ENCODE measurements at regions of chr15 and their contacts with region 1.

Region 1: DNA sequence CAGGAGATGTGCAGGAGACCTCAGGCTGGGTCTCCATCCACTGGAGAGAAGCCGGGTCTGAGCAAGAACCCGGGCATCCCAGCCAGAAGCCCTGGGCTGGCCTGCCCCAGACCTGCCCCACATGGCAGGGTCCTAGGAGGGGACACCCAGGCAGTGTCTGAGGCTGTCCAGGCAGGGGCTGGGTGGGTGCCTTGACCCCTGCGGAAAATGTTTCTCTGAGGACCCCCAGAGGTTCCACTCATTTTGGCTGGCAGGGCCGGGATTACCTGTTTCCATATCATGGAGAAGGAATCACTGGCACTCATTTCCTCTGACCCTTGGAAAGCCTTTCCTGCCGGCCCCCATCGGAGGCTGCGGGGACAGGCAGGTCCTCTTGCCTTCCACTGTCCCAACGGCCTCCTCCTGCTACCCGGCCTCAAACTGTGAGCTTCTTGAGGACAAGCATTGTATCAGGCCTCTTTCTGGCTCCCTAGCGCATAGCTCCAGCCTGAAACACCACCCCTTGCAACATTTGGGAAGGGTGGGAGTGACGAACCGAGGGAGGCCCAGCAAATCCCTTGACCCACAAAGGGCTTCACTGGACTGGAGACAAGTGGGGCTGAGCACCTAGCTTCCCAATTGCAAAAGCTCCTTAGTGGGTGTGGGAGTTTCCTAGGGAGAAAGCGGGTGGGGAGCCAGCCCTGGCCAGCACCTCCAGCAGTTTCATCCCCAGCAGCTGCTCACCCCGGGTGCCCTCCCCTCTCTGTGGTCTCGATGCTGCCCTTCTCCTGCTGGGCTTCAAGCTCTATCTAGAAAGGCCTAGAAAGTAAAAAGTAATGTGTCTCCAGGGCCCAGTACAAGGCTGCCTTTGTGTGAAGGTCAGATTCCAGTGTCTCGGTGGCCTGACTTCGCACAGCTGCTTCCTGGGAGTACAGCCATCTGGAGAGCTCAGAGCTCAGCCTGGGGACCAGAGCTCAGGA is 29.7 kb downstream of the ACSBG1 start:
- DNase-seq: no peak
- H3K4me3 ChIP-seq: no peak overlapping the region
- H3K27ac ChIP-seq: no peak overlapping the region
- H3K4me1 ChIP-seq: peaks cover 0 to 13% of the 10 kb centered on the region in 2 experiments; a peak in 2 of 4 replicates
- H3K27me3 ChIP-seq: 0 out of 2 replicates have a peak, but pooled peaks cover 8% of the 10 kb centered on the region
- CTCF ChIP-seq: no peak
- EP300 ChIP-seq: no peak
- RAD21 ChIP-seq: no peak

Region 2: DNA sequence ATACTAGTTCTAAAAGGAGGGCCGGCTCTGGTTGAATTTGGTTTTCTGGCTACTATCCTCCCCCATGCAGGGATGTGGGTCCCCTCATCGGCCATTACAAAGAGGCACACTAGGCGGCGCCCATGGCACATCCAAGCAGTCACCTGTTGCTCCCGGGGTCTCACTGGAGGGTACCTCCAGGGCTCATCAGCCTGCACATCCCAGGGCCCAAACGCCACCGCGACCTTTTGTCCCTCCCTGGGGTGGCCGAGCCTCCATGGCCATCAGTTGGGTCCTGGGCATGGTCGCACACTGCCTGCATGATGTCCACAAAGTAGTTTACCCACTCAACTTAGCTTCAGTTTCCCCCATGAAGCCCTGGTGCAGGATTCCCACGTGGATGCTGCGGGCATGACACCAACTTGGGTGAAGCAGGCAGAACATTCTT is 27.2 kb before region 1 on chr15:
- CTCF ChIA-PET with region 1: interaction called, 12 read pairs
- POLR2A ChIA-PET with region 1: no interaction called
- DNase-seq: peak; percentile 78
- H3K4me3 ChIP-seq: no peak overlapping the region; a peak in 1 of 4 replicates
- H3K27ac ChIP-seq: no peak overlapping the region
- H3K4me1 ChIP-seq: no peaks in the 10 kb centered on the region; a peak in 1 of 4 replicates
- H3K27me3 ChIP-seq: no peaks in the 10 kb centered on the region
- CTCF ChIP-seq: peak; percentile 84
- EP300 ChIP-seq: no peak
- RAD21 ChIP-seq: peak; percentile 75

Region 3: DNA sequence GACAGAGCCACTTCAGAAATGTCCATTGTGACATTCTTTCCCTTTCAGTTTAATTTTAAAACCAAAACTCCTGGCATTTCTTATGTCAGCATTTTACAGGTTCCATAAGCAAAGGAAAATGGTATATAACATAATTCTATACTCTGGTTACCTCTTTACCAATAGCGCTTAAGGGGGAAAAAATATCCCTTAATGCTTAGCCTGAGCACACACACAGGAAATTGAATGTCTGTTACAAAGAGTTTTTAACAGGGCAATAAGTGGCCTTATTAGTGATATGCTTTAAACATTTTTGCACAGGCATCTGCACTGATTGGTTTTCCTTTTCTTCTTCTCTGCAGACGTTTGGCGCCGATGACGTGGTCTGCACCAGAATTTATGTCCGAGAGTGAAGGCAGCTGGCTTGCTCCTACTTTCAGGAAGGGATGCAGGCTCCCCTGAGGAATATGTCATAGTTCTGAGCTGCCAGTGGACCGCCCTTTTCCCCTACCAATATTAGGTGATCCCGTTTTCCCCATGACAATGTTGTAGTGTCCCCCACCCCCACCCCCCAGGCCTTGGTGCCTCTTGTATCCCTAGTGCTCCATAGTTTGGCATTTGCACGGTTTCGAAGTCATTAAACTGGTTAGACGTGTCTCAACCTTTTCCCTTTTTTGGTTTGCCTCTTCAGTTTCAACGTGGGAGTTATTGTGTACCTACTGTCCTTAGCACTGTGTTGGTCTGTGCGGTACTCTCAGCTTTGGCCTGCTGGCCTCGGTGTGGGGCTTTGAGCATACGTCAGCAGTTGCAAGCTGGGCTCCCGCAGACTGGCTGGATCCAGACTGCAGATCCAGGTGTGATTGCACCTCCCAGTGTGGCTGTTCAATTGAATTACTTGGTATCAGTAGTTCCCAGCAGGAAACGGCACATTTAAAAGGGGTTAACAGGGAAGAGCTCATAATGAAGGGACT is 143.2 kb after region 1 on chr15:
- CTCF ChIA-PET with region 1: no interaction called
- POLR2A ChIA-PET with region 1: no interaction called
- DNase-seq: no peak
- H3K4me3 ChIP-seq: no peak overlapping the region
- H3K27ac ChIP-seq: no peak overlapping the region
- H3K4me1 ChIP-seq: peaks cover 0 to 10% of the 10 kb centered on the region in 2 experiments; a peak in 1 of 4 replicates
- H3K27me3 ChIP-seq: peaks cover 25% of the 10 kb centered on the region; the same call in 1 of the 2 replicates
- CTCF ChIP-seq: no peak
- EP300 ChIP-seq: no peak
- RAD21 ChIP-seq: no peak